AG04449 (cell line): ENCODE measurements at regions of chr11 and their contacts with region 1.

Region 1: DNA sequence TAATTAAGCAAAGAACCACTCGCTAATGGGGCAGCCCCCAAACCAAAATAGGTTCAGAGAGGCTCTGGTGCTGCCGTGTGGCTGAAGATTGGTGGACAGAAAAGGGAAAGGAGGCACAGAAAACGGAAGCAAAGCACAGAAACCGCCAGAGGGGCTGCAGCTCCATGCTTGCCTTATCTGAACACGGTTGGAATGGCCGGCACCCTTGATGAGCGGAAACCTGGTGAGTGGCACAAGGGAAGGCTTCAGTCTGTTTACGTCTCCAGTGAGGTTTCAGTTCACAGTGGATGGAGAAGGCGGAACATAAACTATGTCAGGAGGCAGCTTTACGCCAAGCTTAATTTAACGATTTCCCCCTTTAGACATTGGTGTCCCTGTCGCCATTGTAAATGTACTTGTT is 5.2 kb upstream of the PRR33 start:
- DNase-seq: no peak
- H3K4me3 ChIP-seq: no peak overlapping the region
- CTCF ChIP-seq: no peak

Region 2: GRCh38 chr11:1946812-1947484 is 50.0 kb after region 1 on chr11 and contains the start of gene MRPL23:
- CTCF ChIA-PET with region 1: interaction called, 18 read pairs
- POLR2A ChIA-PET with region 1: no interaction called
- DNase-seq: no peak
- H3K4me3 ChIP-seq: no peak within 1 kb of the TSS
- CTCF ChIP-seq: no peak